Colonic mucosa (tissue), 4 donors: ENCODE measurements at regions of chr1 and their contacts with region 1.

Region 1: GRCh38 chr1:71074681-71075080 is 6.2 kb downstream of the ZRANB2 start:
- DNase-seq: no peak
- H3K4me3 ChIP-seq: no peak overlapping the region
- H3K27ac ChIP-seq: no peak overlapping the region
- H3K4me1 ChIP-seq: peaks cover 7% of the 10 kb centered on the region
- H3K27me3 ChIP-seq: no peaks in the 10 kb centered on the region
- CTCF ChIP-seq: no peak

Region 2: GRCh38 chr1:70234733-70235132 is 839.9 kb before region 1 on chr1:
- intact Hi-C with region 1: loop called (anchors 10 kb)
- DNase-seq: no peak
- H3K4me3 ChIP-seq: no peak overlapping the region
- H3K27ac ChIP-seq: no peak overlapping the region
- H3K4me1 ChIP-seq: no peaks in the 10 kb centered on the region
- H3K27me3 ChIP-seq: no peaks in the 10 kb centered on the region
- CTCF ChIP-seq: no peak